PC-3 (cell line): ENCODE measurements at regions of chr9 and their contacts with region 1.

Region 1: GRCh38 chr9:132644251-132644650 is 25.5 kb downstream of the DDX31 start:
- DNase-seq: peak; percentile 6
- ATAC-seq: peak; percentile 48
- H3K4me3 ChIP-seq: no peak overlapping the region
- H3K27ac ChIP-seq: no peak overlapping the region
- H3K4me1 ChIP-seq: peaks cover 33% of the 10 kb centered on the region
- H3K27me3 ChIP-seq: no peaks in the 10 kb centered on the region
- CTCF ChIP-seq: peak; percentile 45

Region 2: GRCh38 chr9:132498531-132499210 is 145.6 kb before region 1 on chr9:
- CTCF ChIA-PET with region 1: no interaction called
- POLR2A ChIA-PET with region 1: interaction called, 14 read pairs
- intact Hi-C with region 1: no loop called
- DNase-seq: no peak
- ATAC-seq: no peak
- H3K4me3 ChIP-seq: no peak overlapping the region
- H3K27ac ChIP-seq: no peak overlapping the region
- H3K4me1 ChIP-seq: no peaks in the 10 kb centered on the region
- H3K27me3 ChIP-seq: peaks cover 15% of the 10 kb centered on the region
- CTCF ChIP-seq: no peak